ENCODE measurements at regions of chr10 and their contacts with region 1.

Region 1: GRCh38 chr10:33330543-33331378 is 3.7 kb downstream of the NRP1 start:
- DNase-seq: peak; percentile 91 to 95
- ATAC-seq: peak; percentile 60
- H3K4me3 ChIP-seq: peak overlapping the region; percentile 65 to 69
- H3K27ac ChIP-seq: no peak overlapping the region
- H3K4me1 ChIP-seq: peaks cover 0 to 6% of the 10 kb centered on the region in 2 donors
- H3K27me3 ChIP-seq: no peaks in the 10 kb centered on the region

Region 2: DNA sequence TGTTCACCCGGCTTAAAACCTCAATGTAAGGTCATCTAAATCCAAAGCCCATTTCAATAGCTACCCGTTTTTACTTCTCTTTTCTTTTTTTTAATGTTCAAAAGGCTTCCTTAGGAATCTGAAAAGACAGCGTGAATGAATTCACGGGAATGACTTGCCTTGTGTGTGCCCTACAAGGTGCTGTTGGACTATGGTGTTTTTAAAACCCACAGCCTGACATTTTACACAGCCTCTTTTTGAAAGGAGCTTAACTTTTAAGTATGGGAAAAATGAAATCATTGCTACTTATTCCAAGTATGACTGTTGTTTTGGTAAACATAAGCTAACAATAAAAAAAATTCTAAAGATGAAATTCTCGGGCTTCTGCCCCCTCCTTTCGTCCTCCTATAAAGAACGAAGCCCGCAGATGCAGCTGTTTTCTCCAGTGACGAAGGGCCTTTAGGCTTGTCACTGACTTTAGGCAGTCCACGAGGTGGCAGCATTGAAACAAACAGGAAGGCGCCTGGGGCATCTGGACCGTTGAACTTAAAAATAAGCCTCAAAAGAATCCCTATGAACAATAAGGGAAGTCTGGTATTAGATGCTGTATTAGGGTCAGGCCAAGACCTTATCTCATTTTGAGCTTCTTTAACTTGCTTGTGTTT is 137.6 kb before region 1 on chr10:
- intact Hi-C with region 1: loop called (anchors 5 kb)
- DNase-seq: peak; percentile 87 to 89
- ATAC-seq: peak; percentile 88
- H3K4me3 ChIP-seq: no peak overlapping the region
- H3K27ac ChIP-seq: no peak overlapping the region
- H3K4me1 ChIP-seq: peaks cover 0 to 4% of the 10 kb centered on the region in 2 donors
- H3K27me3 ChIP-seq: no peaks in the 10 kb centered on the region

Region 3: DNA sequence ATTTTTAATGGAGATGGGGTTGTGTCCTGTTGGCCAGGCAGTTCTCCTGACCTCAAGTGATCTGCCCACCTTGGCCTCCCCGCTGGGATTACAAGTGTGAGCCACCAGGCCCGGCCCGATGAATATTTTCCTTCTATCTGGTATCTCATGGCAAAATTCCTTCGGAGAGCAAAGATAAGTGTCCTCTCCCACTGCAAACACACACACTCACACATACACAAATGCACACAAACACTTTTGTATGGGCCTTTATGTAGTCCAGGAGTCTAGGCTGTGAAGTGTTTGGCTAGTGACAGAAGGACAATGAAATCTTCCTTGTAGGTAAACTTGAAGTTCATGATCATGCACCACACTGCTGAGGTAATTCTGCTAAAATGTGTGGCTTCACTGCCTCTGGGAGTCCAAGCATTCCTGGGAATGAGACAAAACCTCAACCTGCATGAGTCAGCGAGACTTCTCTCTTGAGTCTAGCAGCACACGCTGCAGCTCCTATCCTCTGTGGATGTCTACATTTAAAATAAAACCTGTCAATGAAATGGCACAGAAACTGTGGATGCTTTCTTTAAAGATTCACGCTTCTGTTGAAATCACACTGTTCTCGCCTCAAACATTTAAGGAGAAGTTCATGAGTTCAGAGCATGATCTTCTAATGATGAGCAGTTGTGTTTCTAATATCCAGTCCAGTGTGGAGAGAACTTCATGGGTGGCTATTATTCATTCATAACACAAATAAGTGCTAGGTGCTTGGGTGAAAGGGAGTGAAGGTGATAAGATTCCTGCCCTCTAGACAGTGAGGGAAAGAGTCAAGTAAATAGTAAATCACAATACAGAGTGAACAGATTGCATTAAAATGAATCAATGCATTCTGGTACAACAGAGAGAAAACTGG is 92.8 kb before region 1 on chr10:
- intact Hi-C with region 1: no loop called
- DNase-seq: no peak
- ATAC-seq: no peak
- H3K4me3 ChIP-seq: no peak overlapping the region
- H3K27ac ChIP-seq: no peak overlapping the region
- H3K4me1 ChIP-seq: peaks cover 2 to 8% of the 10 kb centered on the region in 2 donors
- H3K27me3 ChIP-seq: no peaks in the 10 kb centered on the region

Region 4: GRCh38 chr10:33286157-33286934 is 44.4 kb before region 1 on chr10:
- intact Hi-C with region 1: loop called (anchors 5 kb)
- DNase-seq: no peak
- ATAC-seq: peak; percentile 65
- H3K4me3 ChIP-seq: no peak overlapping the region
- H3K27ac ChIP-seq: peak overlapping the region; percentile 63 to 98
- H3K4me1 ChIP-seq: peaks cover 12 to 20% of the 10 kb centered on the region in 2 donors
- H3K27me3 ChIP-seq: no peaks in the 10 kb centered on the region

Region 5: GRCh38 chr10:33509231-33509831 is 178.6 kb after region 1 on chr10:
- intact Hi-C with region 1: loop called in 1 of 2 experiments (anchors 5 kb)
- DNase-seq: peak; percentile 73 to 79
- ATAC-seq: peak; percentile 90
- H3K4me3 ChIP-seq: peak overlapping the region in 1 of 2 donors; percentile 41
- H3K27ac ChIP-seq: peak overlapping the region; percentile 33 to 78
- H3K4me1 ChIP-seq: peaks cover 0 to 7% of the 10 kb centered on the region in 2 donors
- H3K27me3 ChIP-seq: no peaks in the 10 kb centered on the region

Region 6: DNA sequence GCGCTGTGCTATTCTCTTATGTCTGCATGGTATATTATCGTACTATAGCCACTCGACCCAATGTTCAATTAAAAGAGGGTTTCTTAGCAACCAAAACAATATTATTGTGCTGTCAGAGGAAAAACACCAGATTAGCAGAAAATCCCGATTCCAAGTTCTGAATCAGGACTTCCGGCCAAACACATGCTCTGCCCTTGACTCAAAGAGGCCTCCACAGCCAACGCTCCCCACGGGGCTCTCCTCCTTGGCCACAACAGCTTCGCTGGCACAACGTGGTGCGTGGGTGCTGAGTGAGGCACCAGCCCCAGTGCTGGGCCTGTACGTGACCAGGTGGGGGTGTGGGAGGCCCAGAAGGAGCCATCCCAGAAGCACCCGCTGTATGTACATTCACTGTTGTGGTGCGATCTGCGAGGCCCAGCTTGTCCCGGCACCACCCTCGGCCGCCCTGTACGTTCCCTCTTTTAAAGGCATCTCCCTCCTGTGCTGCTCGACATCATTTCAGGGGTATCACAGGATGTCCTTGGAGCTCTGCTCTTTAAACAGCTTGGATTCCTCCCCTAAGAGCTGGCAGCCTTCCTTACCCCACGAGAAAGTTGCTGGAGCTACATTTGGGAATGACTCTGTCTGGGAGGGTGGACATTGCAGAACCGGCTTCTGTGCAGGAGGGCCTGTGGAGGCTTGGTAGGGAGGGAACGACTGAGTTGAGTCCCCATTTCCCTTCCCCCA is 748.1 kb after region 1 on chr10:
- intact Hi-C with region 1: loop called in 1 of 2 experiments (anchors 10 kb)
- DNase-seq: peak; percentile 92 to 96
- ATAC-seq: peak; percentile 87
- H3K4me3 ChIP-seq: no peak overlapping the region
- H3K27ac ChIP-seq: peak overlapping the region in 1 of 2 donors; percentile 73
- H3K4me1 ChIP-seq: peaks cover 0 to 2% of the 10 kb centered on the region in 2 donors
- H3K27me3 ChIP-seq: no peaks in the 10 kb centered on the region

Region 7: GRCh38 chr10:34280599-34281374 is 950.0 kb after region 1 on chr10:
- intact Hi-C with region 1: loop called in 1 of 2 experiments (anchors 10 kb)
- DNase-seq: peak in 1 of 2 donors; percentile 74
- ATAC-seq: peak; percentile 68
- H3K4me3 ChIP-seq: peak overlapping the region; percentile 18 to 20
- H3K27ac ChIP-seq: peak overlapping the region; percentile 45 to 99
- H3K4me1 ChIP-seq: no peaks in the 10 kb centered on the region
- H3K27me3 ChIP-seq: no peaks in the 10 kb centered on the region

Measured in aorta (tissue), 5 donors.